GM12878 (cell line): ENCODE measurements at regions of chr3 and their contacts with region 1.

Region 1: GRCh38 chr3:197736491-197737318 is at the start of gene RUBCN:
- DNase-seq: peak; percentile 81
- ATAC-seq: peak; percentile 88
- H3K4me3 ChIP-seq: peak within 1 kb of the TSS; percentile 81
- H3K27ac ChIP-seq: peak within 1 kb of the TSS; percentile 95
- H3K4me1 ChIP-seq: peaks cover 12% of the 10 kb centered on the region
- H3K27me3 ChIP-seq: no peaks in the 10 kb centered on the region
- CTCF ChIP-seq: no peak
- EP300 ChIP-seq: no peak; a peak in 1 of 4 replicates
- POLR2A ChIP-seq: peak; percentile 81
- RAD21 ChIP-seq: no peak
- polyA plus RNA-seq, gene RUBCN: 15.5 to 25.5 TPM

Region 2: DNA sequence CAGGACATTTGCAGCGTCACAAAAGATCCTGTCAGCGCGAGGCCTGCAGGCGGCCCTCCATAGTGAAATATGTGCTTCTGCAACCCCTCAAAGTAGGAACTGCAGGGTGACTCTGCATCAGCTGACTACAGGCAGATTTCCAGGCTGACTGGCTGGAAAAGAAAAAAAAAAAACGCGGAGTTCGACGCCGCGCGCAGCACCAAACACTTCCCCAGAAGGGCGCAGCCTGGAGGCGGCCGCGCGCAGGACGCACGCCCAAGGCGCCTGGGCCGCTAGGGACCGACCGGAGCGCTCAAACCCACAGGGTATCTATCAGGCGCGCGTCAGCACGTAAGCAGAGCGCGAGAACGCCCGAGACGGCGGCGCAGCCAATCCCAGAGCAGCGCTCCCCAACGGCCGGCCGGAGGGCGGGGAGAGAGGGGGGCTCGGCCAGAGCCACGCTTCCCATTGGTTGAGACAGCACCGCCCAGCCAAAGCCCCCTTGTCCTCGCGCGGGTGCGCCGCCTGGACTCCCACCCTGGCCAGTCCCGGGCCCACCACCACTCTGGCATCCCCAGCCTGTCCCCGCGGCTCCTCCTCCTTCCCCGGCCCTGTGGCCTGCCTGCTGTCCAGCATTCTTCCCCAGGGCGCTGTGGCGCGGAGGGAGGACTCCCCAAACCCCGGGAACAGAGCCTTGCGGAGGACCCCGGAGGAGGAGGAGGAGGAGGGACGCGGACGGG is 182.0 kb before region 1 on chr3:
- CTCF ChIA-PET with region 1: no interaction called
- POLR2A ChIA-PET with region 1: no interaction called
- RAD21 ChIA-PET with region 1: no interaction called
- SMC1A ChIA-PET with region 1: no interaction called
- in situ Hi-C with region 1: no loop called
- intact Hi-C with region 1: loop called (anchors 1 kb)
- DNase-seq: peak; percentile 83
- ATAC-seq: peak; percentile 96
- H3K4me3 ChIP-seq: peak overlapping the region; percentile 92
- H3K27ac ChIP-seq: peak overlapping the region; percentile 93
- H3K4me1 ChIP-seq: no peaks in the 10 kb centered on the region; the same call in 1 of the 2 replicates
- H3K27me3 ChIP-seq: no peaks in the 10 kb centered on the region
- CTCF ChIP-seq: peak; percentile 51 to 65 (median 60)
- EP300 ChIP-seq: no peak
- POLR2A ChIP-seq: peak; percentile 83
- RAD21 ChIP-seq: no peak

Region 3: DNA sequence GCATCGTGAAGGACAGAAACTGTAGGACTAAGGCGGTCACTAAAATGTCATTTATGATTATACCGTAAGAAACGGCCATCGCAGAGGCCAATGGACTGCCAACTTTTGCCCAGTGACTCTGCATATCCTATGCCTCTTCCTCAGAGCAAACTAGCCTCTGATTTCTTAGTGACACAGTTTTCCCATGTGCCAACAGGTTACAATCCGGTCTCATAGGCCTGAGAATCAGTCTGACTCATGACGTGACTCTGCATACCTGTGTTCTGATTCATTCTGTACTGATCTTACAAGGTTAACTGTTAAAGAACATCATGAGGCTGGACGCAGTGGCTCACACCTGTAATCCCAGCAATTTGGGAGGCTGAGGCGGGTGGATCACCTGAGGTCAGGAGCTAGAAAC is 17.8 kb before region 1 on chr3:
- CTCF ChIA-PET with region 1: interaction called, 37 read pairs
- POLR2A ChIA-PET with region 1: interaction called, 72 read pairs
- RAD21 ChIA-PET with region 1: interaction called, 57 read pairs
- SMC1A ChIA-PET with region 1: interaction called, 127 read pairs
- in situ Hi-C with region 1: no loop called
- intact Hi-C with region 1: no loop called
- DNase-seq: no peak
- ATAC-seq: no peak
- H3K4me3 ChIP-seq: no peak overlapping the region
- H3K27ac ChIP-seq: no peak overlapping the region
- H3K4me1 ChIP-seq: peaks cover 16% of the 10 kb centered on the region
- H3K27me3 ChIP-seq: no peaks in the 10 kb centered on the region
- CTCF ChIP-seq: no peak
- EP300 ChIP-seq: no peak
- POLR2A ChIP-seq: no peak
- RAD21 ChIP-seq: no peak

Region 4: DNA sequence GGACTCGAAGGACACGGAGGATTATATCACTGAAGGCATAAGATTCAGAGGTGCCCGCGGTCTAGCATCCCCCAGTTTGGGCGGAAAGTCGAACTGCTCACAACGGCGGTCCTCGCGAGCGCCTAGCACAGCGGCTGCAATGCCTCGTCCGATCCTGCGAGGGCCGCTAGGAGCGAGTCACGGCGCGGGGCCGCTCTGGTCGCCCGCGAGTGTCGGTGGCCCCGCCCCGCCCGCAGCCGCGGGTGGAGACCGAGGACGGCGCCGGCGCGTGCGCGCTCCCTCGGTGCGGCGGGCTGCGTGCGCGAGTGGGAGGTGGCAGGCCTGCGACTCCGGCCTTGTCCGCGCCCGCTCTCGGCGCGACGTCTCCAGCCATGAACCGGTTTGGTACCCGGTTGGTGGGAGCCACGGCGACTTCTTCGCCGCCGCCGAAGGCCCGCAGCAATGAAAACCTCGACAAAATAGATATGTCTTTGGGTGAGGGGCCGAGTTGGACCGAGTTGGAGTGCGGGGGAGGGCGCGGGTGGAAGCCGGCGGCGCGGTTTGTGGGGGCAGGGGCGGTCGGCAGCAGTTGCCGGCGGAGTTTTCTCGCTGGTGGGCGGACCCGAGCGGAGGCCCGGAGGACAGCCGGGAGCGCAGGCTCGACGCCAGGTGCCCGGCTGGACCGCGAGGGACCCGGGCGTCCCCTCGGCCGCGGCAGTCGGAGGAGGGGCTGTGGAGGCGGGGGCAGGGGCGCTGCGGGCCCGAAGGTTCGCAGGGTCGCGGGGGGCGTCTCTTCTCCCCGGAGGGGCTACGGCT is 13.1 kb after region 1 on chr3 and contains the start of gene FYTTD1:
- CTCF ChIA-PET with region 1: interaction called, 5 read pairs
- POLR2A ChIA-PET with region 1: interaction called, 14 read pairs
- RAD21 ChIA-PET with region 1: interaction called, 8 read pairs
- SMC1A ChIA-PET with region 1: interaction called, 10 read pairs
- in situ Hi-C with region 1: no loop called
- intact Hi-C with region 1: loop called (anchors 1 kb)
- DNase-seq: no peak
- ATAC-seq: peak; percentile 87
- H3K4me3 ChIP-seq: peak within 1 kb of the TSS; percentile 82
- H3K27ac ChIP-seq: peak within 1 kb of the TSS; percentile 84
- H3K4me1 ChIP-seq: peaks cover 19% of the 10 kb centered on the region
- H3K27me3 ChIP-seq: no peaks in the 10 kb centered on the region
- CTCF ChIP-seq: peak; percentile 47 to 63 (median 50); a peak in 5 of 6 replicates
- EP300 ChIP-seq: 0 out of 4 replicates have a peak, but pooled peaks of 1 of the 2 experiments have one; percentile 9
- POLR2A ChIP-seq: peak; percentile 75
- RAD21 ChIP-seq: peak; percentile 49
- polyA plus RNA-seq, gene FYTTD1: 25.5 to 35.5 TPM

Region 5: DNA sequence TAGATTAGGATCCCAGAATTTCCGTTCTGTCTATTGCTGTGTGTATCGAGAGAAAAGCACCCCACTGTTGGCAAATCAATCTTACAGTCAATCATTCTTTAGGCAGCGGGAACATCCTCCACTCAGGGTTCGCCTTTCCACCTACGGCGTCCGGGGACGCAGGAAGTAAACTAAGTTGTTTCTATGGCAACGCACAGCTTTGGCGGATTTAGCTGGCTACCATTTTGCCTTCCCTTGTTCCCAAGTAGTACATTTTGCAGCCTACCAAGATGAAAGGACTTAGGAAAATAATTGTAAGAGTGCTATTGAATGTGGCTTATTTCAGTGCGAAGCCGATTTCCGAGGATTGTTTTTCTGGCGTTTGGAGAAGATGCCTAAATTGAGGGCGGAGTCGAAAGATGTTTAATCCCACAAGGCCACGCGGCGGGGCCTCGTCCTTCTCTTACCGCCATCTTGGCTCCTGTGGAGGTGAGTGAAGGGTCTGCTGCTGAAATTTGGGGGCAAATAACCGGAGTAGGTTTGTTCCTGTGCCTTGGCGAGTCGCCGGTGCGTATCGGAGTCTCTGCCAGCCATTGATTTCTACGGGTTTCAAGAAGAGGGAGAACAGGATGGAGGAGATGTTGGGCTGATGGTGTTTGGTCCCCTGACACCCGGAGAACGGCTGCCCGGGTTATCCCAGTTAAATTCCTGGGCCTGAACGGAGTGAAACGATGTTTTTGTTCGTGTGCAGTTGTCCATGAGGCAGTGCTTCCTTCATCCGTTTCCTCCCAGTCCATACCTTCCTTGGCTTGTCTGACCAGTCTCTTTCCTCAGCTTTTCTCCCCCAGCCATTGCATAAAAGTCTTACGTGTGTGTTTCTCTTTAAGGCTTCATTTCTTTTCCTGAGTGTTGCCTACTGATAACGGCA is 213.3 kb after region 1 on chr3 and contains the start of gene RPL35A:
- CTCF ChIA-PET with region 1: no interaction called
- POLR2A ChIA-PET with region 1: no interaction called
- RAD21 ChIA-PET with region 1: no interaction called
- SMC1A ChIA-PET with region 1: no interaction called
- in situ Hi-C with region 1: no loop called
- intact Hi-C with region 1: no loop called
- DNase-seq: peak; percentile 98
- ATAC-seq: peak; percentile 89
- H3K4me3 ChIP-seq: peak within 1 kb of the TSS; percentile 95
- H3K27ac ChIP-seq: peak within 1 kb of the TSS; percentile 95
- H3K4me1 ChIP-seq: peaks cover 3% of the 10 kb centered on the region; the same call in 1 of the 2 replicates
- H3K27me3 ChIP-seq: no peaks in the 10 kb centered on the region
- CTCF ChIP-seq: no peak
- EP300 ChIP-seq: peak in 1 of 2 experiments; percentile 62; a peak in 2 of 4 replicates
- POLR2A ChIP-seq: peak; percentile 98
- RAD21 ChIP-seq: no peak
- polyA plus RNA-seq, gene RPL35A: 2,763 to 3,144 TPM